Ascending aorta (tissue), 2 donors: ENCODE measurements at regions of chr4 and their contacts with region 1.

Region 1: GRCh38 chr4:40056716-40057585 is at the start of gene N4BP2:
- DNase-seq: peak; percentile 21 to 88
- H3K4me3 ChIP-seq: peak within 1 kb of the TSS; percentile 72 to 98
- H3K27ac ChIP-seq: peak within 1 kb of the TSS; percentile 97 to 100
- H3K4me1 ChIP-seq: peaks cover 0 to 11% of the 10 kb centered on the region in 2 donors
- H3K27me3 ChIP-seq: no peaks in the 10 kb centered on the region
- CTCF ChIP-seq: peak; percentile 47 to 77 (median 74)
- total RNA-seq, gene N4BP2: 0.53 TPM

Region 2: DNA sequence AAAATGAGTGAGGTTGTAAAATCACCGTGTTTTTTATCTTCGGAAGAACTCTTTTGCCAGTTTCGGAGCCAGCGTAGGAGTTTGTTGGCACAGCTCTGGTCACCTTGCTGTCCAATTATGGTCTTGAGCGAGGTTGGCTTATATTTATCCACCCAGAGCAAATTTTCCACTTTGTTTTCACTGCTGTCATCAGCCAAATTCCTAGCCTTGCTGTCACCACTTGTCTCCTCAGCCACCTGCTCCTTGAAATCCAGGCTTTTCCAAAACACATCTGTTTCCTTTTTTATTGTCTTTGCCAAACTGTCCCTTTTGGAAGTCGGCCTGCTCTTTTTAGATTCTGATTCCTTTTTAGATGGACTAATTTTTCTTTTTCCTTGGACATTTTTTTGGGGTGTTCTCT is 748.3 kb before region 1 on chr4:
- intact Hi-C with region 1: no loop called
- DNase-seq: no peak
- H3K4me3 ChIP-seq: no peak overlapping the region
- H3K27ac ChIP-seq: peak overlapping the region in 1 of 2 donors; percentile 58
- H3K4me1 ChIP-seq: no peaks in the 10 kb centered on the region
- H3K27me3 ChIP-seq: no peaks in the 10 kb centered on the region
- CTCF ChIP-seq: no peak

Region 3: GRCh38 chr4:39458505-39459300 is 598.2 kb before region 1 on chr4 and contains the starts of genes LIAS and RPL9:
- intact Hi-C with region 1: loop called (anchors 1 kb)
- DNase-seq: peak; percentile 90 to 98
- H3K4me3 ChIP-seq: peak within 1 kb of the TSS; percentile 82 to 96
- H3K27ac ChIP-seq: peak within 1 kb of the TSS; percentile 96 to 98
- H3K4me1 ChIP-seq: peaks cover 2 to 16% of the 10 kb centered on the region in 2 donors
- H3K27me3 ChIP-seq: no peaks in the 10 kb centered on the region
- CTCF ChIP-seq: peak in 1 of 3 experiments; percentile 24
- total RNA-seq, gene LIAS: 2.9 TPM
- total RNA-seq, gene RPL9: 1,701 TPM

Region 4: GRCh38 chr4:39977489-39978377 is 79.2 kb before region 1 on chr4 and contains the start of gene PDS5A:
- intact Hi-C with region 1: loop called (anchors 1 kb)
- DNase-seq: peak; percentile 44 to 93
- H3K4me3 ChIP-seq: peak within 1 kb of the TSS; percentile 98 to 99
- H3K27ac ChIP-seq: peak within 1 kb of the TSS; percentile 94 to 95
- H3K4me1 ChIP-seq: peaks cover 0 to 18% of the 10 kb centered on the region in 2 donors
- H3K27me3 ChIP-seq: no peaks in the 10 kb centered on the region
- CTCF ChIP-seq: peak; percentile 71 to 94 (median 83)
- total RNA-seq, gene PDS5A: 52.9 TPM

Region 5: DNA sequence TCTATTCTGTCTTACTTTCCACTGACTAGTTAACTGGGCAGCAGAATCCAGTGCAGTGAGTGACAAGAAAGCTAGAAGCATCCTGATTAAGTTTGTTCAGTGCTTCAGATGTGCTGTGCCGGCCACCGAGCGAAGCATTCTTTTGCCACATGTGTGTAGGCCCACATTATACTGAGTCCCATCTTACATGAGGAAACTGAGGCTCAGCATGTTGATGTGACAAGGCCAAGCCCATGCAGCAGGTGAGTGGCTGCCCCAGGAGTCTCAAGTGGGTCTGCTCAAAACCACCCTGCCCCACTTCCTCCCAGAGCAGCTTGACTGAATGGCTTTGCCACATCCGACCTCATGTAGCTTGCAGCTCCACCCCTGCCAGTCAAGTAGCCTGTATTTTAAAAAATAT is 190.4 kb after region 1 on chr4:
- intact Hi-C with region 1: no loop called
- DNase-seq: no peak
- H3K4me3 ChIP-seq: no peak overlapping the region
- H3K27ac ChIP-seq: no peak overlapping the region
- H3K4me1 ChIP-seq: no peaks in the 10 kb centered on the region
- H3K27me3 ChIP-seq: no peaks in the 10 kb centered on the region
- CTCF ChIP-seq: no peak

Region 6: DNA sequence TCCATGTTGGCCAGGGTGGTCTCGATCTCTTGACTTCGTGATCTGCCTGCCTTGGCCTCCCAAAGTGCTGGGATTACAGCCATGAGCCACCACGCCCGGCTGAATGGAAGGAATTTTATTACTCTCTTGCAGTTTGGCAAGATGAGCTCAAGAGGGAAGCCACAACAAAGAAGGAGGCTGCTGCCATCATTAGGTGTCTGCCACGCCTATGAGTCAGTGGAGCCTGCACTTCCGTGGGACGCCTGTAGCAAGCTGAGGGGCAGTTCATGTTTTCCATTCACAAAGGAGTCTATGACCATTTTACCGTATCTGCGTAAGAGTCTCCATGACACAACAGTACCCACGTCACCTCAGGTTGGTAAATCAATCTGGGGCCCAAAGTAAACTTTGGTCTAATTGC is 227.0 kb after region 1 on chr4:
- intact Hi-C with region 1: no loop called
- DNase-seq: no peak
- H3K4me3 ChIP-seq: no peak overlapping the region
- H3K27ac ChIP-seq: no peak overlapping the region
- H3K4me1 ChIP-seq: no peaks in the 10 kb centered on the region
- H3K27me3 ChIP-seq: no peaks in the 10 kb centered on the region
- CTCF ChIP-seq: no peak

Region 7: GRCh38 chr4:40309250-40309774 is 252.4 kb after region 1 on chr4:
- intact Hi-C with region 1: loop called (anchors 2 kb)
- DNase-seq: peak; percentile 59 to 93
- H3K4me3 ChIP-seq: peak overlapping the region in 1 of 2 donors; percentile 23
- H3K27ac ChIP-seq: no peak overlapping the region
- H3K4me1 ChIP-seq: no peaks in the 10 kb centered on the region
- H3K27me3 ChIP-seq: no peaks in the 10 kb centered on the region
- CTCF ChIP-seq: peak; percentile 58 to 87 (median 79)

Region 8: GRCh38 chr4:40316782-40317635 is 260.1 kb after region 1 on chr4:
- intact Hi-C with region 1: loop called (anchors 2 kb)
- DNase-seq: peak in 1 of 2 donors; percentile 74
- H3K4me3 ChIP-seq: peak overlapping the region; percentile 37 to 55
- H3K27ac ChIP-seq: peak overlapping the region; percentile 59 to 70
- H3K4me1 ChIP-seq: no peaks in the 10 kb centered on the region
- H3K27me3 ChIP-seq: no peaks in the 10 kb centered on the region
- CTCF ChIP-seq: peak; percentile 73 to 76 (median 74)